ENCODE measurements at regions of chr7 and their contacts with region 1.

Region 1: DNA sequence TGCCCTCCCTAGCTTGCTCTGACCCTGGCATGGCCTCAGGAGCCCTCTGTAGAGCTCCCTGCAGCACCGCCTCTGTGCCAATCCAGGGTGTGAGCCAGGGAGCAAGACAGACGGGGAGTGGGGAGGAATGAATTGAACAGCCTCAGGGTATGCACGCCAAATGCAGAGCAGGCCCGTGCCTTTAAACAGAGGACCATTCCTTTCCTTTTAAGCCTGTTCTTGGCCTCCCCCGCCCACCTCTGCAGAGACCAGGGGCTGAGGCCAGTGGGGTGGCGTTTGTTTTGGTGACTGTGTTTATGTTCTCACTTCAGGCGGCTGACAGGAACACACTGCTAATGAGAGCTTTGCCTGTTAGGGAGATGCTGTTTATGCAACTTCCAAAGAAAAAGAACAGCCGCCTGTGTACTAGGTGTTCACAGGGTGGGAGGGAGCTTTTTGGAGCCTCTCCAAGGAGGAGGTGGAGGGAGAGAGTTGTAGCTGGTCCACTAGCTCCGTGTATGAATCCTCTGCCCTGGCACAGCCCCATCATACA is 528.1 kb upstream of the DPP6 start:
- DNase-seq: no peak
- ATAC-seq: no peak
- H3K4me3 ChIP-seq: no peak overlapping the region
- H3K27ac ChIP-seq: no peak overlapping the region
- H3K4me1 ChIP-seq: no peaks in the 10 kb centered on the region
- H3K27me3 ChIP-seq: no peaks in the 10 kb centered on the region
- CTCF ChIP-seq: no peak

Region 2: GRCh38 chr7:153576096-153576495 is 52.0 kb after region 1 on chr7:
- intact Hi-C with region 1: loop called in 1 of 3 experiments (anchors 10 kb)
- DNase-seq: no peak
- ATAC-seq: no peak
- H3K4me3 ChIP-seq: no peak overlapping the region
- H3K27ac ChIP-seq: no peak overlapping the region
- H3K4me1 ChIP-seq: no peaks in the 10 kb centered on the region
- H3K27me3 ChIP-seq: no peaks in the 10 kb centered on the region
- CTCF ChIP-seq: no peak

Region 3: DNA sequence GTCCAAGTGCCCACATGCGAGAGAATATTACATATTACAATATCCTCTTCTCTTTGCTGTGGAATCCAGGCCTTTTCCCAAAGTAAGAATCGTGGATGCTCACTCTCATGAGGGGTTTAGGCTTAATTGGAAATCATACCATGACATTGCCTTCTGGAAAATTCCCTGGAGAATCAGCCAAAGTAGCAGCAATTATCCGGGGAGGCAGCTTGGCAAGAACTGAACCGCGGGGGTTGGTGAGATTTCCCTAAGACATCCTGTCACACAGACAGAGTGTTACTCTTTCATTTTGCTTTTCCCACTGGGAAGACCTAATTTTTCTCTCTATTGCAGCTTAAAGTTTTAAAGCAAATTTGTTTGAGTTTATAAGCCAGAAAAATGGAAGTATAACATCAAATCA is 64.5 kb after region 1 on chr7:
- intact Hi-C with region 1: no loop called
- DNase-seq: no peak
- ATAC-seq: no peak
- H3K4me3 ChIP-seq: no peak overlapping the region
- H3K27ac ChIP-seq: no peak overlapping the region
- H3K4me1 ChIP-seq: no peaks in the 10 kb centered on the region
- H3K27me3 ChIP-seq: no peaks in the 10 kb centered on the region
- CTCF ChIP-seq: no peak

Measured in pancreas (tissue), 10 donors.